IMR-90 (cell line): ENCODE measurements at regions of chr19 and their contacts with region 1.

Region 1: DNA sequence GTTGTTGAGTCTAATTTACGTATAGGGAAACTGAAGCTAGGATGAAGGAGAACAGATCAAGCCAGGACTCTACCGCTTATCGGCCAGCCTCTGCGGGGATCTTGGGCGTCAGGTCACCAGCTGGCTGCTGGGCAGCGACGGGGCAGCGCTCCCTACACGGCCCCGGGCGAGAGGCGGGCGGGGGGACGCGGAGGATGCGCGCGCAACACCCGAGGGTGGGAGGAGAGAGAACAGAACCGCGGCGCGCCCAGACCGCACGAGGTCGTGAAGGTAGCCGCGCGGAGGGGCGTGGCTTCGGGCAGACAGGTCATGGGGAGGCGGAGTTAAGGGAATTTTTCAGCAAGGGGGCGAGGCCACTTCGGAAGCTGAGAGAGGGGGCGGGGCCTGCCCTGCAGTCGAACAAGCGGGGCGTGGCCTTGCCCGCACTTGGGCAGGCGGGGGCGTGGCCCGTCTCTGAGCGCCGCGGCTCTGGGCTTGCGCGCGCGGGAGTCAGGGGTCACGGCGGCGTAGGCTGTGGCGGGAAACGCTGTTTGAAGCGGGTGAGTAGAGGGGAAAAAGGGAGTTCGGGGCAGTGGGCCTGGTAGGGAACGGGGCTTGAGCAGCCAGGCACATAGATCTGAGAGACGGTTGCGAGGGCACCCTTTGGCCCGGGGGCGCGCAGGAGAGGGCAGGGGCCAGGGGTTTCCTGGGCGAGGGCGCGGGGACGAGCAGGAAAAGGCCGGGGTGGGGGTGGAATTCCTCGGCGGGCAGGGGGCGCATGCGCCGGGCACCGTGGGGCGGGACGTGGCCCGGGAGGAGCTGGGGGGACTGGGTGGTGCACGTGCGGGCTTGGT is at the start of gene POLD1:
- DNase-seq: peak; percentile 96
- ATAC-seq: peak; percentile 96
- H3K4me3 ChIP-seq: peak within 1 kb of the TSS; percentile 76
- H3K27ac ChIP-seq: peak within 1 kb of the TSS; percentile 92
- H3K4me1 ChIP-seq: no peaks in the 10 kb centered on the region; the same call in 1 of the 2 replicates
- H3K27me3 ChIP-seq: no peaks in the 10 kb centered on the region
- CTCF ChIP-seq: no peak
- POLR2A ChIP-seq: peak; percentile 78
- RAD21 ChIP-seq: no peak
- total RNA-seq, gene POLD1: 13.1 and 13.8 TPM in 2 replicates

Region 2: DNA sequence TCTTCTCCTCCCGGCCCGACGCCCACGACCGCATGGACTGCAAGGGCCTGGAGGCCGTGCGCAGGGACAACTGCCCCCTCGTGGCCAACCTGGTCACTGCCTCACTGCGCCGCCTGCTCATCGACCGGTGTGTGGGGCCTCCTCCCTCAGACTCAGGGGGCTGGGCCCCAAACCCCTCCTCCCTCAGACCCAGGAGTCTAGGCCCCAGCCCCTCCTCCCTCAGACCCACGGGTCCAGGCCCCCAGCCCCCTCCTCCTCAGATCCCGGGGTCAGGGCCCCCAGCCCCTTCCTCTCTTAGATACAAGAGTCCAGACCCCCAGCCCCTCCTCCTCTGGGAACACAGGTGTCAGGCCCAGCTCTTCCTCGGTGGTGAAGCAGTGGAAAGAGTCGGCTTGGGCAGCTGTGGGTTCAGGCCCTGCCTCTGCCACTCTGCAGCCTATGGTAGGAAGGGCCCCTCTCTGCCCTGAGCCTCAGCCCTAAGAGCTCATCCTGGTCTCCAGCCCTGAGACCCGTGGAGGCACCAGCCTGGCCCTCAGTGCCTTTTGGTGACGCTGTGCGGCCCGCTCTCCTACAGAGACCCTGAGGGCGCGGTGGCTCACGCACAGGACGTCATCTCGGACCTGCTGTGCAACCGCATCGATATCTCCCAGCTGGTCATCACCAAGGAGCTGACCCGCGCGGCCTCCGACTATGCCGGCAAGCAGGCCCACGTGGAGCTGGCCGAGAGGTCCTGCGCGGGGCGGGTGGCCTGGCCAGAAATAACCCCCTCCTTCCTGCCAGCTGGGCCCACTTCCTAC is 31.0 kb after region 1 on chr19:
- CTCF ChIA-PET with region 1: no interaction called
- POLR2A ChIA-PET with region 1: no interaction called
- dilution Hi-C with region 1: no loop called
- in situ Hi-C with region 1: no loop called
- intact Hi-C with region 1: loop called (anchors 2 kb)
- DNase-seq: peak; percentile 54
- ATAC-seq: peak; percentile 94
- H3K4me3 ChIP-seq: no peak overlapping the region
- H3K27ac ChIP-seq: no peak overlapping the region
- H3K4me1 ChIP-seq: no peaks in the 10 kb centered on the region
- H3K27me3 ChIP-seq: peaks cover 17% of the 10 kb centered on the region
- CTCF ChIP-seq: peak; percentile 71
- POLR2A ChIP-seq: no peak
- RAD21 ChIP-seq: peak; percentile 61